ENCODE measurements at regions of chr10 and their contacts with region 1.

Region 1: GRCh38 chr10:12042797-12043651 is at the start of gene UPF2:
- DNase-seq: peak; percentile 99
- H3K4me3 ChIP-seq: peak within 1 kb of the TSS; percentile 50 to 80 (median 56)
- H3K27ac ChIP-seq: peak within 1 kb of the TSS; percentile 98
- H3K4me1 ChIP-seq: peaks cover 5% of the 10 kb centered on the region
- H3K27me3 ChIP-seq: peaks cover 0 to 3% of the 10 kb centered on the region in 2 experiments
- CTCF ChIP-seq: no peak
- POLR2A ChIP-seq: no peak
- total RNA-seq, gene UPF2: 23.9 and 27.7 TPM in 2 replicates

Region 2: DNA sequence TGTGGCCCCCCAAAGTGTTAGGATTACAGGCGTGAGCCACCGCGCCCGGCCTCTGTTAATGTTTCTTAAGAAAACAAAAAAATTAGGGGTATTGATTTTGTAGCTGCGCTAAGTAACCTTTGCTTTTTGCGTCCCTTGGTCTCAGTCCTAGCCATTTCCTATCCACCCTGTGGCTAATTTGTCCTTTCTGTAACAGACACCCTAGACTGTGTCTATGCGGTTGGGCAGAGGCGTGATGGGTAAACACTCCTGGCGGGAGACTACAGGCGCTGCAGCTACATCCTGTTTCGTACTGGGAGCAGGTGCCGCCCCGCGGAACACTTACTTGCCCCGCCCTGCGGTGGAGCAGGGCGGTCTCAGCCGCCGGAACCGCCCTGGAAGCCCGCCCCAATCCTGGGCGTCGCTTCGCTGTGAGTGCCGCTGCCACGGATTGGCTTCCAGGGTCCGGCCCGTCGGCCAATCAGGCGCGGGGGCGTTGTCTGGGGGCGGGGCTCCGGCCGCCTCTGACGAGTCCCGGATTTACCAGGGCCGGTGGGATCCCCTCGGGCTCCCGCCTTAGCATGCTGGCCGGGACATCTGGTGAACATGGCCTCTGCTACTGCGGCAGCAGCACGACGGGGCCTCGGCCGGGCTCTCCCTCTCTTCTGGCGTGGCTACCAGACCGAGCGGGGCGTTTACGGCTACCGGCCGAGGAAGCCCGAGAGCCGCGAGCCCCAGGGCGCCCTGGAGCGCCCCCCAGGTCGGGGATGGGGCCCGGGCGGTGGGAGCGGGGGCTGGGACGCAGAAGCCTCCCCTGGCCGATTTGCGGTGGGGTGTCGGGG is 25.6 kb after region 1 on chr10 and contains the start of gene DHTKD1:
- CTCF ChIA-PET with region 1: interaction called, 14 read pairs
- POLR2A ChIA-PET with region 1: interaction called, 9 read pairs
- dilution Hi-C with region 1: no loop called
- intact Hi-C with region 1: loop called (anchors 1 kb)
- DNase-seq: peak; percentile 99
- H3K4me3 ChIP-seq: peak within 1 kb of the TSS; percentile 82 to 92 (median 87)
- H3K27ac ChIP-seq: peak within 1 kb of the TSS; percentile 53
- H3K4me1 ChIP-seq: peaks cover 8% of the 10 kb centered on the region
- H3K27me3 ChIP-seq: peaks cover 0 to 6% of the 10 kb centered on the region in 2 experiments
- CTCF ChIP-seq: peak; percentile 7 to 44
- POLR2A ChIP-seq: peak; percentile 65
- total RNA-seq, gene DHTKD1: 15.3 and 17.6 TPM in 2 replicates

Region 3: DNA sequence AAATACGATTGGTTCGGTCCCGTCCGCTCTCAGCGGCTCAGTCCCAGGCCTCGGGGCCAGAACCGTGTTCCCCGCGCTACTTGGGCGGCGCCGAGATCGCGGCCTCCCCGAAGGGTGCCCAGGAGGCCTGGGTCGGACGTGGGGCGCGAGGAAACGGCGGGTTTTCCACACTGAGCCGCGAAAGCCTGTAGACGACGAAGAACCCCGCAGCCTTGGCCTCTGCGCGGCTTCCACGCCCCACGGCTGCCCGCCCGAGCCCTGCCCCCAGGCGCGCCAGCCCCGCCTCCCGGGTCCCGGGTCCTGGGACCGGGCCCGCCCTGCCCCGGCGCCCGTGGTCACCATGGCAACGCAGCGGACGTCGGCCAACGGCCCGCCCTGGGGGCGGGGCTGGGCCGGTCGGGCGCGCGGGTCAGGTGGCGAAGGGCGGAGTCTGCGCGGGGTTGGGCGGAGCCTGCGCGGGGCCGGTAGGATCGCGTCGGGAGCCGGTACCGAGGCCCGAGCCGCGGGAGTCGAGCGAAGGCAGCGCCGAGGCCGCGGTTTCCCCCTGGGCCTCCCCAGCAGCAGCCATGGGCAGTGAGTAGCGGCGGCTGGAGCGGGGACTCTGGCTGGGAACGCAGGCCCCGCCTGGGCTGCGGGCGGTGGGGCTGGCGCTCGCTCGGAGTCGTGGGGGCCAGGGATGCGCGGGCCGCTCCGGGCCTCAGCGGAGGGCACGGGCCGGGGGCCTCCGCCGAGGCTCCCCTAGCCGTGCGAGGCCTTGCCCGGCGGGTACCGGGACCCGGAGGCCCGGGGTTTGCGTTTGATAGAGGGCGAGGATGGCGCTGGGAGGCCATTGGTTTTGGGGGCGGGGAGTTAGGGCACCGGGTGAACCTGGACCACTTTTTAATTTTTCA is 86.4 kb after region 1 on chr10 and contains the start of gene SEC61A2:
- CTCF ChIA-PET with region 1: no interaction called
- POLR2A ChIA-PET with region 1: interaction called, 4 read pairs
- dilution Hi-C with region 1: no loop called
- intact Hi-C with region 1: loop called (anchors 1 kb)
- DNase-seq: peak; percentile 91
- H3K4me3 ChIP-seq: peak within 1 kb of the TSS; percentile 74 to 79 (median 78)
- H3K27ac ChIP-seq: peak within 1 kb of the TSS; percentile 67
- H3K4me1 ChIP-seq: peaks cover 2% of the 10 kb centered on the region
- H3K27me3 ChIP-seq: no peaks in the 10 kb centered on the region
- CTCF ChIP-seq: no peak
- POLR2A ChIP-seq: peak; percentile 76
- total RNA-seq, gene SEC61A2: 7.3 and 9.5 TPM in 2 replicates